ENCODE measurements at regions of chr14 and their contacts with region 1.

Region 1: DNA sequence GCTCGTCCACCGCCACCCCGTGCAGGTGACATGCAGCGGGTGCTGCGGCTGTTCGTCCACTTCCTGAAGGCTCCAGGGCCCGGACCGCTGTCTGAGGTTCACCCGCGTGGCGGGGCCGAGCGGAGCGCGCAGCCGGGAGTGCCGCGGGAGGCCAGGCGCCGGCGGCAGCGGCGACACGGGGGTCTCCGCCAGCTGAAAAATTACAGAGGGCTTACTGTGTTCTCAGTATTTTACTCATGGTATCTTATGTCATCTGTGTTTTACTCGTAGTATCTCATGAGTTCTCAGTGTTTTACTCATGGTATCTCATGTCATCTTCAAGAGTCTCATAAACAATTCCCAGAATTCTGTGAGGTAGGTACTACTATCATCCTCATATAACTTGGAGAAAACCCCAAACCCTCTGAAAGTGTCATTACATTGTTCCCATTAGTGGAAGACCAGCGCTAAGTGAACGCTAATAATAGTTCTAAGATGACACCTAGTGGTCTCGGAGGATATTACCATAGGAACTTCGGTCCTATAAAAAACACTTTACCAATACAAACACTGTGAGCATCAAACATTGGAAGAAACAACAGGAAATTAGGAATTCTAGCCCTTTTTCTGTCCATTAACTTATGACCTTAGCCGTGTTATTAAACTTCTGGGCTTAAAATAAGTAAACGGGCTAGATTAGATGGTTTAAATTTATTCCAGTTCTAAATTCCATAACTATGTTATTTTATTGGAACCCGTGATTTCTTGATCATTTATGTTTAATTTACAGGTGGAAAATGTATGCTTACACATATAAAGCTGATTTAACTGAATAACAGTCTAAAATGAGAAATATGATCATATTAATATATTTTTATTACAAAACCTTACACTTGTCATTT is 32.4 kb downstream of the AK7 start:
- DNase-seq: no peak
- H3K4me3 ChIP-seq: peak overlapping the region; percentile 27 to 67 (median 35)
- H3K27ac ChIP-seq: no peak overlapping the region
- H3K4me1 ChIP-seq: peaks cover 0 to 14% (median 4%) of the 10 kb centered on the region in 3 donors
- H3K27me3 ChIP-seq: peaks cover 0 to 4% (median 0%) of the 10 kb centered on the region in 4 donors
- CTCF ChIP-seq: peak; percentile 57 to 86 (median 78)
- POLR2A ChIP-seq: no peak

Region 2: DNA sequence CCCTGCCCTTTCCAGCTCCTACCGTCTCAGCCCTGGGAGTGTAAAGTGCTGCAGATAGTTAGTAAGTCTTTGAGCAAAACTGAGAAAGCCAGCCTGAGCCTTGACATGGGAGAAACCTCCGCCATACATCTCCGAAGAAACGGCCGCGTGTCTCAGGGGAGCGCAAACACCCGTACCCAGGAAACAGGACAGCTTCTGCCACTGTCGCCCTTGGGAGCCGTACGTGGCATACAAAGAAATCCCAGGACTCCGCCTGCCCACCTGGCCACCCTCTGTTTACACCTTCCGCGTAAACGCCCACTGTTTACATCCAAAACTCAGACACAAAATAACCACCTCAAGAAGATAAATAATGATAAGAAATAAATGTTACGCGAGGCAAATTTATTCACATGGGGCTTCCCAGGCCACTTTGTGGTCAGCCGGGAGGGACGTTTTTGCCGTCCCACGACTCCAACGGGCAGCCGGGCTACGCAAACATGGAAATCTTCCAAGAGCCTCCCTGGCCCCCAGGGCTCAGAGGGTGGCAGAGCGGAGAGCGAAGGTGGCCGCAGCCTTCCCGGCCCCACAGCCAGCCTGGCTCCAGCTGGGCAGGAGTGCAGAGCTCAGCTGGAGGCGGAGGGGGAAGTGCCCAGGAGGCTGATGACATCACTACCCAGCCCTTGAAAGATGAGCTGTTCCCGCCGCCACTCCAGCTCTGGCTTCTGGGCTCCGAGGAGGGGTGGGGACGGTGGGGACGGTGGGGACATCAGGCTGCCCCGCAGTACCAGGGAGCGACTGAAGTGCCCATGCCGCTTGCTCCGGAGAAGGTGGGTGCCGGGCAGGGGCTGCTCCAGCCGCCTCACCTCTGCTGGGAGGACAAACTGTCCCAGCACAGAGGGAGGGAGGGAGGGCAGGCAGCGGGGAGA is 219.9 kb before region 1 on chr14 and contains the start of gene BDKRB2:
- intact Hi-C with region 1: no loop called
- DNase-seq: no peak
- H3K4me3 ChIP-seq: peak within 1 kb of the TSS; percentile 65 to 75 (median 68)
- H3K27ac ChIP-seq: peak within 1 kb of the TSS; percentile 91 to 97 (median 96)
- H3K4me1 ChIP-seq: peaks cover 22 to 77% (median 33%) of the 10 kb centered on the region in 3 donors
- H3K27me3 ChIP-seq: peaks cover 0 to 17% (median 0%) of the 10 kb centered on the region in 4 donors
- CTCF ChIP-seq: no peak
- POLR2A ChIP-seq: peak in 3 of 4 donors; percentile 46 to 88 (median 86)
- total RNA-seq, gene BDKRB2: 18.8 to 31.2 (median 20.0) TPM

Region 3: GRCh38 chr14:96297000-96297399 is 127.3 kb before region 1 on chr14:
- intact Hi-C with region 1: loop called (anchors 5 kb)
- DNase-seq: no peak
- H3K4me3 ChIP-seq: no peak overlapping the region
- H3K27ac ChIP-seq: no peak overlapping the region
- H3K4me1 ChIP-seq: no peaks in the 10 kb centered on the region
- H3K27me3 ChIP-seq: no peaks in the 10 kb centered on the region
- CTCF ChIP-seq: peak in 5 of 6 experiments; percentile 31 to 59 (median 42)
- POLR2A ChIP-seq: no peak